ENCODE measurements at regions of chr19 and their contacts with region 1.

Region 1: GRCh38 chr19:8355631-8356402 is 8.1 kb upstream of the ANGPTL4 start:
- DNase-seq: no peak
- H3K4me3 ChIP-seq: no peak overlapping the region
- H3K27ac ChIP-seq: peak overlapping the region in 3 of 4 donors; percentile 6 to 15 (median 13)
- H3K4me1 ChIP-seq: peaks cover 7 to 42% (median 13%) of the 10 kb centered on the region in 3 donors
- H3K27me3 ChIP-seq: peaks cover 0 to 29% (median 0%) of the 10 kb centered on the region in 4 donors
- CTCF ChIP-seq: no peak
- POLR2A ChIP-seq: no peak

Region 2: DNA sequence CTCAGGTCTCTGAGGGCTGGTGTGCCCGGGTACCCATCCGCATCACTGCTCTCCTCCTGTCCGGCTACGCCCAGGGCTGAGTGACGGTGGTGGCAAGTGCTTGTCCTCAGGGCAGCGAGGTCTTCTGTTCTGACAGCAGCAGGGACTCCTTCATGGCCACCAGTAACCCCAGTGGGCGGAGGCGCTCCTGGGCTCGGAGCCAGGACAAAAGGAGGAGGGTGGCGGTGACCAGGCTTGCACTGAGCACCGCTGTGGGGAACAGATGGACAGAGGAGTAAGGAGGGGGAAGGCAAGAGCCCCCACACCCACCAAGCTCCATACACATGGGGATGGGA is 53.5 kb before region 1 on chr19:
- intact Hi-C with region 1: no loop called
- DNase-seq: no peak
- H3K4me3 ChIP-seq: no peak overlapping the region
- H3K27ac ChIP-seq: no peak overlapping the region
- H3K4me1 ChIP-seq: peaks cover under 1 to 13% (median 9%) of the 10 kb centered on the region in 3 donors
- H3K27me3 ChIP-seq: no peaks in the 10 kb centered on the region
- CTCF ChIP-seq: no peak
- POLR2A ChIP-seq: no peak

Region 3: DNA sequence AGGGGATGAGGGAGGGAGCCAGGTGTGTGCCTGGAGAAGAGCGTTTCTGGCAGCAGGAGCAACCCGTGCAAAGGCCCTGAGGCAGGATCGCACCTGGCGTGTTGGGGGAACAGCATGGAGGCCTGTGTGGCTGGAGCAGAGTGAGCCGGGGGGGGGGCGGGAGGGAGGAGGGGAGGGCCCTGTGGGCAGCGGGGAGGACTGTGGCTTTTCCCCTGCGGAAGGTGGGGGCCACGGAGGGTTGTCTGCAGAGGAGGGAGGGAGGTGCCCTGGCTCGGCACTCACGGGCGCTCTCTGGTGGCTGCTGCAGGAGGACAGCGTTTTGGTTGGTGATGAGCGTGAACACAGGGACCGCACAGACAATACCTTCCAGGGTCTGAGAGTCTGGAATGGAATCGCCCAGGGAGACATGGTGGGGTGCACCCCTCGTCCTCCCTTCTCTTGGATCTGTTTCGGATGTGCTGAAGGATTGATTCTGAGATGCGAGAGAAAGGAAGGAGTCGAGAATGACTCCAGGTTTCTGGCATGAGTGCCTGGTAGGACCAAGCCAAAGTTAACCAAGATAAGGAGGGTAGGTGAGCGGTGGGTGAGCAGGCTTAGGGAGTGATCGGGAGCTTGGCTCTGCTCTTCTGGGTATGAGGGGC is 40.9 kb after region 1 on chr19:
- intact Hi-C with region 1: loop called (anchors 5 kb)
- DNase-seq: no peak
- H3K4me3 ChIP-seq: no peak overlapping the region
- H3K27ac ChIP-seq: peak overlapping the region in 3 of 4 donors; percentile 1 to 39 (median 21)
- H3K4me1 ChIP-seq: peaks cover 29 to 76% (median 47%) of the 10 kb centered on the region in 3 donors
- H3K27me3 ChIP-seq: no peaks in the 10 kb centered on the region
- CTCF ChIP-seq: peak; percentile 44 to 75 (median 62)
- POLR2A ChIP-seq: no peak

Region 4: GRCh38 chr19:8580710-8581281 is 225.0 kb after region 1 on chr19:
- intact Hi-C with region 1: loop called (anchors 10 kb)
- DNase-seq: no peak
- H3K4me3 ChIP-seq: peak overlapping the region in 1 of 4 donors; percentile 32
- H3K27ac ChIP-seq: no peak overlapping the region
- H3K4me1 ChIP-seq: peaks cover 5 to 45% (median 13%) of the 10 kb centered on the region in 3 donors
- H3K27me3 ChIP-seq: peaks cover 0 to 32% (median 0%) of the 10 kb centered on the region in 4 donors
- CTCF ChIP-seq: peak; percentile 98 to 100 (median 99)
- POLR2A ChIP-seq: no peak

Measured in esophagus squamous epithelium (tissue), 5 donors.